Activated CD4-positive, alpha-beta T cell treated with anti-CD3 and anti-CD28 coated beads for 36 hours (primary cell): ENCODE measurements at regions of chr2 and their contacts with region 1.

Region 1: DNA sequence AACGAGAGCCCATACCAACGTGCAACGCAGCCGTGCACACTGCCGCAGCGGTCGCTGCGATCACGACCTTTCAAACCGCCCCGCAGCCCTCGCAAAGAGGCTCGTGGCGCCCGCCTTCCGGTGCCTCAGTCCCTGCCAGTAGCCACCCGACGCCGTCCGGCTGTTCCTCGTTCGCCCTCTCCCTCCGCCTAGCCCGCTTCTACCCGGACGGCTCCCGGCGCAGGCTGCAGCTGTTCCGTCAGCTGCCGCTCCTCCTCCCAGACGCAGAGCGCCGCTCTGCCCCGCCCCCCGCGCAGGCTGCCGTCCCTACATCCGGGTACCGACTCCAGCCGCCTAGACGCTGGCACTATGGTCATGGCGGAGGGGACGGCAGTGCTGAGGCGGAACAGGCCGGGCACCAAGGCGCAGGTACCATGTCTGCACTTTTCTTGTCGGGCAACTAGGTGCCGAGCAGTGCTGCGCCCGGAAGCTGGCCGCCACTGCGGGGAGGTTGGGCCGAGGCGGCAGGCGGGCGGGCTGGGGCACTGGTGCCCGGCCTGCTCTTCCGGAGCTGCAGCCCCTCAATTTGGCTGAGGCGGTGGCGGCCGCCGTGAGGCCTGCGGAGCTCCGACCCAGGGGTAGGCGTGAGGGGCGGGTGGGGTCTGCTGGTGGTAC is at the start of gene MOB4:
- DNase-seq: peak; percentile 97
- ATAC-seq: peak; percentile 95
- H3K4me3 Mint-ChIP-seq: peak within 1 kb of the TSS; percentile 94
- H3K27ac Mint-ChIP-seq: peak within 1 kb of the TSS; percentile 96
- H3K4me1 Mint-ChIP-seq: peaks cover 21% of the 10 kb centered on the region
- H3K27me3 Mint-ChIP-seq: no peaks in the 10 kb centered on the region
- total RNA-seq, gene MOB4: 10.8 to 17.1 TPM

Region 2: DNA sequence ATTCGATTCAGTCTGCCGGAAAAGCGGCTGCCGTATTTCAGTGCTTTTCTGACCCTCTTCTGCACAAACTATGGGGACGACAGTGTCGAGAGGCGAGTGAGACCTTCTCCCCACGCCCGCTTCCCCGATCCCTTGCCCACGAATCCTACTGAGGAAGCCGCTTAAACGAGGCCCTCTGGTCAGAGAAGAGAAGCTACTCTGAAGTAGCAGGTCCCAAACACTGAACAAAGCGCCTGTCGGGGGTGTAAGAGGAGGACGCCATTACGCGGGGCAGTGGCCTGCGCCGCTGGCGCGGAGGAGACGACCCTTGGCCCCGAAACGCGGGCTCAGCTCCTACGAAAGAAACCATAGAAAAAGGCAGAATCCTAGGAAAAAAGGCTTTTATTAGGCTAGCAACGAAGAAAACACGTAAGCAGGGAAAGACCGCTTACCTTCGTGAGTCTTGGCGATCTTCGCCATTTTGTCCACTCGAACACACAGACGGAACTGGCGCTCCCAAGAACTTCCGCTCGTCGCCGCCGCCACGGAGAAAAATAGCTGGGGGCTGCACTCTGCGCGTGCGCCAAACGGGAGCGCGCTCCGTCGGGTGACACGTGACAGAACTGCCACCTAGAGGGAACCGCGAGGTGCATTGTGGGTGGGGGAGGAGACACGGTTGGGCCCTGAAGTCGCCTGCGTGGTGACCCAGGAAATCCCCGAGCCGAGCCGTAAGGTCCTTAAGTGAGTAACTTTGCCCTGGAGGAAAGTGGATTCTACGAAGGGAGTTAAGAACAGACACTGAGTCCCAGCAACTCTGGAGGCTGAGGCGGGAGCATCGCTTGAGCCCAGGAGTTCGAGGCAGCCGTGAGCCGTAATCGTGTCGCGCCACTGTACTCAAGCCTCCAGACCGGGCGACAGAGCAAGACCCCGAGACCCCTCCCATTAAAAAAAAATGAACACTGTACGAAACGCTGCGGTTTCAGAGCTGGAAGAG is 81.0 kb before region 1 on chr2 and contains the start of gene SF3B1:
- CTCF ChIA-PET with region 1: interaction called, 3 read pairs
- POLR2A ChIA-PET with region 1: interaction called, 5 read pairs
- intact Hi-C with region 1: loop called (anchors 1 kb)
- DNase-seq: peak; percentile 100
- ATAC-seq: peak; percentile 94
- H3K4me3 Mint-ChIP-seq: peak within 1 kb of the TSS; percentile 98
- H3K27ac Mint-ChIP-seq: peak within 1 kb of the TSS; percentile 99
- H3K4me1 Mint-ChIP-seq: peaks cover 44% of the 10 kb centered on the region
- H3K27me3 Mint-ChIP-seq: no peaks in the 10 kb centered on the region
- total RNA-seq, gene SF3B1: 262 to 277 TPM

Region 3: DNA sequence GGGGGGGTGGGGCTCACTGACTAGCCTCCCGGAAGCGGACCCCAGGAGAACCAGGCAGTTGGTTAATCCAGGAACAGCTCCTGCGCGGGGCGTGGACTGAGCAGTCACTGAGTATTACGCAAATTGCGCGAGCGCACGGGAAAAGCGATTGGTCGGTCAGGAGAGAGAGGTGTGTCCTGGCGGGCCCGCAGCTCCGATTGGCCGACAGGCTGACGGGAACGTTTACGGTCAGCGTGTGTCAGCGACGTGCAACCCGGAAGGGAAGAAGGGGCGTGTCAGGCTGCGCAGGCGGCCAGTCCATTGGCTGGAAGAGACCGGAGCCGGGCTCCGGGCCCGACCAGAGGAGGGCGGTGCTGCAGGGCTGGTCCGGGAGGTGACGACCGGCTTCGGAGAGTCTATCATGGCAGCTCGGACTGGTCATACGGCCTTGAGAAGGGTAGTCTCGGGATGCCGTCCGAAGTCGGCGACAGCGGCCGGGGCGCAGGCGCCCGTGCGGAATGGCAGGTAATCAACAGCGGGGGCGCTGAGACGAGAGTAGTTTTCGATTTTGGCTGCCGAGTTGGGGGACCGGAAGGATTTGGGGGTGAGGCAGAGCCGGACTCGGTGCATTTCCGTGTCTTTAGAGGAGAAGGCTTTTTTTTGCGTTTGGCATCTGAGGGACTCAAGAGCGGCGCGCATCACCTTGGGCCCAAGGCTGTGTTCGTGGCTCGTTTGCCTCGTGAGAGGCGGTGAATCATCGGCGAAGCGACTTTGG is 62.5 kb before region 1 on chr2 and contains the start of gene COQ10B:
- CTCF ChIA-PET with region 1: no interaction called
- POLR2A ChIA-PET with region 1: interaction called, 5 read pairs
- intact Hi-C with region 1: loop called (anchors 1 kb)
- DNase-seq: peak; percentile 99
- ATAC-seq: peak; percentile 93
- H3K4me3 Mint-ChIP-seq: peak within 1 kb of the TSS; percentile 90
- H3K27ac Mint-ChIP-seq: peak within 1 kb of the TSS; percentile 96
- H3K4me1 Mint-ChIP-seq: peaks cover 42% of the 10 kb centered on the region
- H3K27me3 Mint-ChIP-seq: no peaks in the 10 kb centered on the region
- total RNA-seq, gene COQ10B: 9.7 to 13.3 TPM

Region 4: GRCh38 chr2:197487385-197487784 is 28.5 kb before region 1 on chr2:
- CTCF ChIA-PET with region 1: no interaction called
- POLR2A ChIA-PET with region 1: no interaction called
- intact Hi-C with region 1: no loop called
- DNase-seq: no peak
- ATAC-seq: no peak
- H3K4me3 Mint-ChIP-seq: no peak overlapping the region
- H3K27ac Mint-ChIP-seq: peak overlapping the region; percentile 5
- H3K4me1 Mint-ChIP-seq: peaks cover 26% of the 10 kb centered on the region
- H3K27me3 Mint-ChIP-seq: no peaks in the 10 kb centered on the region